ENCODE measurements at regions of chr3 and their contacts with region 1.

Region 1: DNA sequence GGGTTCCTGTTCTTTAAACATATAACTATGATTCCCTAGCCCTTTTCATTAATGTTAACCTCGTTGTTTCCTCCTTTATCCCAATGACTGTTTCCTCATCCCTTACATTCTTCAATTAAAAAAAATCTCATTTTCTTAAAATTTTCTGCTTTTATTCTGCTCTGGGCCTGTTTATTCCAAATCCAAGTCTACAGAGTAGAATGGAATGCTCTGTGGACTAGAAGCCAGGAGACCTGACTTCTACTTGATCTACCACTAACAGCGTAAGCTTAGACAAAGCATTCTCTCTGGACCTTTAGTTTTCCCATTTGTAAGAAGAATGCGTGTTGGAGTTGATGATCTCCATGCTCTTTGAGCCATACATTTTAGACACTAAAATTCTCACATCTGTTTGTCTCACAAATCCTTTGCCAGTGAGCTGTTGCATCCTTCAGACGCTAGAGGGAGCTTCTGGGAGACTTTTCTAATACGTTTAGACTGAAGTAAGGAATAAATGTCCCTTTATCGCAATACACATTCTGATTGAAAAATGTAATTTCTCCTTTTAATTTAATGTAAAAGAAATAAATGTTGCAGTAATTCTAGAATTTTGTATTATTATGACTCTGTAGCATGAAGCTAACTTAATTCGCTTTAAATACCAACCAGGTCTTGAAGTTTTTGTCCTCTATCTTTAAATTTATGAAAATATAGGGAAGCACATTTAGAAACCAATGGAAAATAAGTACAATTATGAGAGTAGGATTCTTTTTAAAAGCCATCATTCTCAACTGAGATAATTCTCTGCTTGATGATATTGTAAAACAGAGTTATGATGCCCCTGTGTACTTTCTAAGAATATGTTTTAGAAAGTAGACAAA is 21.7 kb upstream of the GMNC start:
- DNase-seq: peak; percentile 31
- H3K4me3 Mint-ChIP-seq: no peak overlapping the region
- H3K27ac Mint-ChIP-seq: no peak overlapping the region
- H3K4me1 Mint-ChIP-seq: no peaks in the 10 kb centered on the region
- H3K27me3 Mint-ChIP-seq: no peaks in the 10 kb centered on the region

Region 2: DNA sequence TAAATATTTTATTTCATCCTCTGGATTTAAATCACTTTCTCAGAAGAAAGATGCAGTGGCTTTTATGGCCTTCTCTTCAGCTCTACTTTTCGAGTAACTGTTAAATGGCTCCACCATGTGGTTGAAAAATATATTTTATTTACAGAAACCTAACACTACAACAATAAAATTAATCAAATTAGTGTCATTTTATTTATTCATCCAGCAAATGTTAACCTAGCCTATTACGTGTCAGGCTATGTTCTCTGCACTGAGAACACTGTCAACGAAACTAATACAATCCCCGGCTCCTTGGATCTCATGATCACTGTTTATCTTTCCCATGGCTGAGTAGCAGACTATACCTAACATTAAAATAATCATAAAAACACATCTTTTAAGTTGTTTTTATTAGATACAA is 166.8 kb after region 1 on chr3:
- CTCF ChIA-PET with region 1: interaction called, 24 read pairs
- POLR2A ChIA-PET with region 1: no interaction called
- DNase-seq: no peak
- H3K4me3 Mint-ChIP-seq: no peak overlapping the region
- H3K27ac Mint-ChIP-seq: no peak overlapping the region
- H3K4me1 Mint-ChIP-seq: no peaks in the 10 kb centered on the region
- H3K27me3 Mint-ChIP-seq: no peaks in the 10 kb centered on the region